Heart right ventricle (tissue), 16 donors: ENCODE measurements at regions of chr1 and their contacts with region 1.

Region 1: GRCh38 chr1:88252745-88253144 is 431.3 kb upstream of the PKN2 start:
- DNase-seq: no peak
- ATAC-seq: no peak
- H3K4me3 ChIP-seq: no peak overlapping the region
- H3K27ac ChIP-seq: no peak overlapping the region
- H3K4me1 ChIP-seq: no peaks in the 10 kb centered on the region
- H3K27me3 ChIP-seq: no peaks in the 10 kb centered on the region
- CTCF ChIP-seq: no peak

Region 2: GRCh38 chr1:88237058-88237457 is 15.7 kb before region 1 on chr1:
- intact Hi-C with region 1: loop called in 1 of 10 experiments (anchors 2 kb)
- DNase-seq: no peak
- ATAC-seq: peak in 6 of 8 donors; percentile 22 to 85 (median 55)
- H3K4me3 ChIP-seq: no peak overlapping the region
- H3K27ac ChIP-seq: peak overlapping the region in 1 of 10 donors; percentile 41
- H3K4me1 ChIP-seq: peaks cover 0 to 4% (median 0%) of the 10 kb centered on the region in 9 donors
- H3K27me3 ChIP-seq: no peaks in the 10 kb centered on the region
- CTCF ChIP-seq: no peak

Region 3: GRCh38 chr1:88552226-88552625 is 299.5 kb after region 1 on chr1:
- intact Hi-C with region 1: no loop called
- DNase-seq: no peak
- ATAC-seq: no peak
- H3K4me3 ChIP-seq: no peak overlapping the region
- H3K27ac ChIP-seq: no peak overlapping the region
- H3K4me1 ChIP-seq: no peaks in the 10 kb centered on the region
- H3K27me3 ChIP-seq: no peaks in the 10 kb centered on the region
- CTCF ChIP-seq: no peak